Activated T-helper 1 cell treated with anti-CD3 and anti-CD28 coated beads, Interleukin-12 subunit alpha, Interleukin-12 subunit beta, Interleukin-2, Interleukin-4 antibody, amounts not matched to agents 30 ng/mL and 10 ng/mL and 1 ng/mL, durations not matched to agents 14 hours and 24 hours and 36 hours (primary cell): ENCODE measurements at regions of chr11 and their contacts with region 1.

Region 1: DNA sequence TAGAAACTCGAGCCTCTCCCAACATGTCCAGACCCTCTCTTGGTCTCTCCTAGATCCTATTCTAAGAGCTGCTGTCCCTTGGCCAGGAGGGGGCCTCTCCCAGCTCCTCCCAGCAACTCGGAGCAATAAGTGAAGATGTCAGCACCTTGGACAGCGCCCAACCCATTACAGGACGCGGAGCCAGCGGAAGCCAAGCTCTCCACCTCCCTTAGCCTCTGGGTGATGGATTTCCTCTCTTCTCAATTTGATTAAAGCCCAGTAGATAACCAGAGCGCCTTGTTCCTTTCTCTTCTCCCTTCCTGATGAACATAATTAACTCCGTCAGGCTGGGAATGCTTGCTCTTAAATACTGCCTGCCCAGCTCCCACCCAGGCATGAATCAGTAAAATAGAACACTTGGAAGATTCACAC is 26.2 kb upstream of the TPBGL start:
- DNase-seq: peak; percentile 68
- H3K4me3 Mint-ChIP-seq: no peak overlapping the region
- H3K27ac Mint-ChIP-seq: no peak overlapping the region
- H3K4me1 Mint-ChIP-seq: peaks cover 5% of the 10 kb centered on the region
- H3K27me3 Mint-ChIP-seq: peaks cover 10% of the 10 kb centered on the region

Region 2: GRCh38 chr11:75174781-75175370 is 39.5 kb before region 1 on chr11:
- intact Hi-C with region 1: loop called (anchors 1 kb)
- DNase-seq: peak; percentile 12
- H3K4me3 Mint-ChIP-seq: peak overlapping the region; percentile 0
- H3K27ac Mint-ChIP-seq: peak overlapping the region; percentile 68
- H3K4me1 Mint-ChIP-seq: peaks cover 18% of the 10 kb centered on the region
- H3K27me3 Mint-ChIP-seq: peaks cover 13% of the 10 kb centered on the region

Region 3: GRCh38 chr11:75233742-75234172 is 19.3 kb after region 1 on chr11:
- intact Hi-C with region 1: loop called (anchors 1 kb)
- DNase-seq: no peak
- H3K4me3 Mint-ChIP-seq: no peak overlapping the region
- H3K27ac Mint-ChIP-seq: no peak overlapping the region
- H3K4me1 Mint-ChIP-seq: no peaks in the 10 kb centered on the region
- H3K27me3 Mint-ChIP-seq: peaks cover 6% of the 10 kb centered on the region

Region 4: DNA sequence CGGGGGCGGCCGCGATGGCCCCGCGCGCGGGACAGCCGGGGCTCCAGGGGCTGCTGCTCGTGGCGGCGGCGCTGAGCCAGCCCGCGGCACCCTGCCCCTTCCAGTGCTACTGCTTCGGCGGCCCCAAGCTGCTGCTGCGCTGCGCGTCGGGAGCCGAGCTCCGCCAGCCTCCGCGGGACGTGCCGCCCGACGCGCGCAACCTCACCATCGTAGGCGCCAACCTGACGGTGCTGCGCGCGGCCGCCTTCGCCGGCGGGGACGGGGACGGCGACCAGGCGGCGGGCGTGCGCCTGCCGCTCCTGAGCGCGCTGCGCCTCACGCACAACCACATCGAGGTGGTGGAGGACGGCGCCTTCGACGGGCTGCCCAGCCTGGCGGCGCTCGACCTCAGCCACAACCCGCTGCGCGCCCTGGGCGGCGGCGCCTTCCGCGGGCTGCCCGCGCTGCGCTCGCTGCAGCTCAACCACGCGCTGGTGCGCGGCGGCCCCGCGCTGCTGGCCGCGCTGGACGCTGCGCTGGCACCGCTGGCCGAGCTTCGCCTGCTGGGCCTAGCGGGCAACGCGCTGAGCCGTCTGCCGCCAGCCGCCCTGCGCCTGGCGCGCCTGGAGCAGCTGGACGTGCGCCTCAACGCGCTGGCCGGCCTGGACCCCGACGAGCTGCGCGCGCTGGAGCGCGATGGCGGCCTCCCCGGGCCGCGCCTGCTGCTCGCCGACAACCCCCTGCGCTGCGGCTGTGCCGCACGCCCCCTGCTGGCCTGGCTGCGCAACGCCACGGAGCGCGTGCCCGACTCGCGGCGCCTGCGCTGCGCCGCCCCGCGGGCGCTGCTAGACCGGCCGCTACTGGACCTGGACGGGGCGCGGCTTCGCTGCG is 26.9 kb after region 1 on chr11:
- intact Hi-C with region 1: loop called (anchors 1 kb)
- DNase-seq: peak; percentile 89
- H3K4me3 Mint-ChIP-seq: peak overlapping the region; percentile 58
- H3K27ac Mint-ChIP-seq: no peak overlapping the region
- H3K4me1 Mint-ChIP-seq: peaks cover 6% of the 10 kb centered on the region
- H3K27me3 Mint-ChIP-seq: peaks cover 52% of the 10 kb centered on the region